ENCODE measurements at regions of chr4 and their contacts with region 1.

Region 1: DNA sequence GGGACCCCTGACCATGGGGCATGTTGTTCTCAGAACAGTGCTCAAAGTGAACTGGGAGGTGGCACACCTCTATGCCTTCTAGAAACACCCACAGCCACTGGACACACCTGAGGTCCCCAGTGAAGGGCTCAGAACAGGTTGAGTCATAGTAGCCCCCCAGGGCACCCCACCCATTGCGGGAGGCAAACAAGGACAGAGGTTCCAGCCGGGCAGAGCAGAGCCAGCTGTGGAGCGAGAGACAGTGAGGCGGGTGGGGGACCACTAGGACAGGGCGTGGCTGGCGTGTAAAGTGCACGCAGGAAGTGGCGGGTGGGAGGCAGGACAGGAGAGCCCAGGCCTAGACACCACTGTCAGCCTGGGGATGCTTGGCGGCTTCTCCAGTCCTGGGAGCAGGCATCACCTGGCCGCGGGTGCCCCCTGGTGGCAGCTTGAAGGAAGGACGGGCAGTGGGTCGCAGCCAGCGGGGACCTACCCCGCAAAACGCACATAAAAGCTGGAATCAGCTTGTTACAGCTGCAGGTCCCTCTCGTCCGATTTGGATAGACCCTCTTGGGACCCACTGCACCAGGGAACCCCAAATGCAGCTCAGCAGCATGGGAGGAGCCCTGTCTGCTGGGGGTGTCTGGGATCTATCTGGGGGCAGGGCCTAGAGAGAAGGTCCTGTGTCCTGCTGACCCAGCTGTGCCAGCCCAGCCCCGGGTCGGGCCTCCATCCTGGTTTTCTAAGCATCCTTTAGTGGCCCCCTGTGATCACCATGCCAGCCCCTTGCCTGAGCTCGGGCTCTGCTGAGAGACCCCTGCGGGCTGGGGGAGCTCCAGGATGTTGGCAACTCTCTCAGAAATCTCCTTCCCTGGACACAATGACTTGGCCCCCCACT is 57.6 kb downstream of the WFS1 start:
- DNase-seq: peak; percentile 90
- CTCF ChIP-seq: peak; percentile 97

Region 2: GRCh38 chr4:6011686-6012085 is 315.6 kb before region 1 on chr4:
- CTCF ChIA-PET with region 1: interaction called, 10 read pairs
- POLR2A ChIA-PET with region 1: no interaction called
- DNase-seq: no peak
- CTCF ChIP-seq: no peak

Region 3: DNA sequence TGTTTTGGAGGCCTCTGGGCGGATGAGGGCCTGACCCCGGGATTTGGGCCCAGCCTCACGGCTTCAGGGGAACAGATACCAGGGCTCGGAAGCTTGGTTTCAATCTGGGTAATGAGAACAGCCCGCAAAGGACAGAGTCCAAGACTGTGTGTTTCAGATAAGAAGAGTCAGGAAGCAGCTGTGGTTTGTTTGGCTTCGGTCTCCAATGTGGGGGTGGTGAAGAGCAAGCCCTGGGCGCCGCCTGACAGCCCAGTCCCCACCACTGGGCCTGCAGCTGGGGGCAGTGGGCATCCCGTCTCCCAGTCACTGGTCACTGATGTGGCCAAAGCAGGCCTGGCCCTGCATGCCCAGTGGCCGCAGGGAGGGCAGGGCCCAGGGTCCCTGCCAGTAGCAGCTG is 48.5 kb before region 1 on chr4:
- CTCF ChIA-PET with region 1: interaction called, 12 read pairs
- POLR2A ChIA-PET with region 1: no interaction called
- DNase-seq: peak; percentile 74
- CTCF ChIP-seq: no peak

Region 4: DNA sequence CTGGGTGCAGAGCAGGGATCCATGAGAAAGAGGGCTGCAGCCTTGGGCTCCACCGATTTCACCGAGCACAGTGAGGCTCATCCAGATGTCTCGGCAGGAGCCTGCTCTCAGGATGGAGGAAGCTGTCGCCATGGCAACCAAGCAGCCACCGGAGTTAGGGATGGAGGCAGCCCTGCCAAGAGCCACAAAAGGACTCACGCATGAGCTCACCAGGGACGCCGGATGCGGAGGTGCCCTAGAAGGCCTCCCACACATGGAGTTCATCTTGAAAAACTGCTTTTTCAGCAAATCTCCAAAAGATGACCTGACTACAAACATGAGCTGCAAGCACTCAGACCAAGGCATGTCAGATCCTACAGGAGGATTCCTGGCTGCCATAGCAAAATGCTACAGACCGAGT is 33.1 kb after region 1 on chr4:
- CTCF ChIA-PET with region 1: interaction called, 11 read pairs
- POLR2A ChIA-PET with region 1: no interaction called
- DNase-seq: no peak
- CTCF ChIP-seq: no peak

Region 5: GRCh38 chr4:6546681-6547447 is 219.6 kb after region 1 on chr4:
- CTCF ChIA-PET with region 1: interaction called, 13 read pairs
- POLR2A ChIA-PET with region 1: no interaction called
- DNase-seq: peak; percentile 78
- CTCF ChIP-seq: peak; percentile 94

Region 6: DNA sequence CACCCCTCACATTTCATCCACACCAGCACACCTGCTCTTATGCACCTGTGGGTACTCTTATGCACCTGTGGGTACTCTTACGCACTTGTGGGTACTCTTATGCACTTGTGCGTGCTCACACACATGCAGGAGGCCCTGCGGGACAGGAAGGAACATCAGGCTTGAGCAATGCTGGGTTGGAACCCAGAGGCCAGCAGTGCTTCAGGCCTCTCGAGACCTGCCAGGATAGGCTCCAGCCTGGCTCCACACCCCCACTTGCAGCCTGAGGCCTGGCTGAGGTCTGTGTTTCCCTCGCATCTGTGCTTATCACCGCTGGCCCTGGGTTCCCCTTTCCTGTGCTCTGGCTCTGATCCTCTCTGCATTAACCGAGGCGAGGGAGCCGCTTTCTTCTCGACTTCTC is 899.7 kb after region 1 on chr4:
- CTCF ChIA-PET with region 1: no interaction called
- POLR2A ChIA-PET with region 1: no interaction called
- DNase-seq: no peak
- CTCF ChIP-seq: no peak

Measured in GM10248 (cell line).